Esophagus muscularis mucosa (tissue), 4 donors: ENCODE measurements at regions of chr10 and their contacts with region 1.

Region 1: GRCh38 chr10:131981429-131982184 is at the start of gene BNIP3:
- DNase-seq: peak; percentile 96
- H3K4me3 ChIP-seq: peak within 1 kb of the TSS; percentile 81 to 99 (median 90)
- H3K27ac ChIP-seq: peak within 1 kb of the TSS; percentile 83 to 87 (median 86)
- H3K4me1 ChIP-seq: peaks cover 35 to 46% (median 40%) of the 10 kb centered on the region in 4 donors
- H3K27me3 ChIP-seq: no peaks in the 10 kb centered on the region
- CTCF ChIP-seq: peak in 1 of 3 experiments; percentile 26
- EP300 ChIP-seq: no peak
- POLR2A ChIP-seq: peak; percentile 90
- total RNA-seq, gene BNIP3: 51.4 to 68.9 (median 62.6) TPM

Region 2: DNA sequence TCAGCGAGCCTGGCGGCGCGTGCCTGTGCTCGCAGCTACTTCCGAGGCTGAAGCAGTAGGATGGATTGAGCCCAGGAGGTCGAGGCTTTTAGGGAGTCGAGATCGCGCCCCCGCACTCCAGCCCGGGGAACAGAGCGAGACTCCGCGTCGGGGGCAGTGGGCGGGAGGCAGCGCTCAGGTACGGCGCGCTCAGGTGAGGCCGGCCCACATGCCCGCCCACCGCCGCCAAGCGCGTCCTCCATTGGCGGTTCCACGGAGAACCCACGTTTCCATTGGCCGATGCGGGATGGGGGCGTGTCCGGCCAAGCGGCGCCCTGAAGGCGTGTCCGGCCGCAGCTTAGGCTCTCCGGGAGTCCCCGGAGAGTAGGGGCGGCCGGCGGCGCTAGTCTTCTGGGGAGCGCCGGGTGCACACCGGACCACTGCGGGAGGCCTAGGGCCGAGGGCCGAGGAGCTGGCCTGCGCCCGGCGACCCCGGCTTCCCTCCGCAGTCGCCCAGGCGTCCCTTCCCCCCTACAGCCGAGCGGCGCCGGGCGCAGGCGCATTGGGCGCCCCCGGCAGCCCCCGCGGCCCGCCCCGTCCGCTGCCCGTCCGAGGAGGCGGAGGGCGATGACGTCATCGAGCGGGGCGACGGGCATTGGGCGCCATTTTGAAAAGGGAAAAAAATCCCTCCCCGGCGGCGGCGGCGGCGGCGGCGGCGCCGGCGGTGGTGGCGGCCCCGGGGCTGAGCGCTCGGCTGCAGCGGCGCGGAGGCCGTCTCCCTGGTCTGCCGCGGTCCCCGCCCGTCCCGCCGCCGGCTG is 81.1 kb before region 1 on chr10 and contains the start of gene PPP2R2D:
- intact Hi-C with region 1: loop called (anchors 5 kb)
- DNase-seq: peak; percentile 97
- H3K4me3 ChIP-seq: peak within 1 kb of the TSS; percentile 76 to 96 (median 88)
- H3K27ac ChIP-seq: peak within 1 kb of the TSS; percentile 92 to 98 (median 96)
- H3K4me1 ChIP-seq: peaks cover 40 to 49% (median 47%) of the 10 kb centered on the region in 4 donors
- H3K27me3 ChIP-seq: peaks cover 0 to 27% (median 6%) of the 10 kb centered on the region in 4 donors
- CTCF ChIP-seq: no peak
- EP300 ChIP-seq: no peak
- POLR2A ChIP-seq: no peak
- total RNA-seq, gene PPP2R2D: 38.2 to 49.7 (median 41.0) TPM

Region 3: DNA sequence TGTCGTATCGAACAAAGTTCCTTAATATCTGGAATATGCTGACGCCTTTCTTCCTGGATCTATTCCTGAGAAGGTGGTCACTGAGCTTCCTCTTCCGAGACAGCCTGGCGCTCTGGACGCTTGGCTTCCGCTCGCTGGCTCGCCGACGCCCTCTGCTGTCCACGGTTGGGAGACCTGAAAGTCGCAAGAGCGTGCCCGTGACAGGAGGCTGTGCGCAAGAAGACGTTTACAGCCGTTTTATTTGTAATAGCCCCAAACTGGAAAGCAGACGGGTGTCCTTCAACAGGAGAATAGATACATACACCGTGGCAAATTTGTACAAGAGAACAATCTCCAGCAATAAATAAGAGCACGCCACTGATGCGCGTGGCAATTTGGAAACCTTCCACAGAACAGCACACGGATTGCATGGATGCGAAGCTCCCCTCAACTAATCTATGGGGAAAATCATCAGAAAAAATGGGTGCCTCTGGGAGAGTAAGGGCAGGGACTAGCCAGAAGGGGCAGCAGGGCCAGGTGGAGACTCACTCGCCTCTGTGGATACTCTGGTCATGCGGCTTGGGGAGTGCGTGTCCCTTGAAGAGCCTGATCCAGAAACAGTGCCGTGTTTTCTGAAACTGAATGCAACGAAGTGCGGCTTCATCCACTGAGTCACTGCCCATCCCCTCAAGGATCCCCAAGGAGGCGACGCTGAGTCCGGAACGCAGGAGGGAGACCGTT is 41.6 kb after region 1 on chr10:
- intact Hi-C with region 1: loop called (anchors 5 kb)
- DNase-seq: no peak
- H3K4me3 ChIP-seq: peak overlapping the region; percentile 14 to 50 (median 40)
- H3K27ac ChIP-seq: no peak overlapping the region
- H3K4me1 ChIP-seq: peaks cover 6 to 12% (median 10%) of the 10 kb centered on the region in 4 donors
- H3K27me3 ChIP-seq: peaks cover 0 to 56% (median 2%) of the 10 kb centered on the region in 4 donors
- CTCF ChIP-seq: peak; percentile 82 to 93 (median 86)
- EP300 ChIP-seq: no peak
- POLR2A ChIP-seq: no peak

Region 4: GRCh38 chr10:132281915-132282666 is 300.5 kb after region 1 on chr10:
- intact Hi-C with region 1: no loop called
- DNase-seq: no peak
- H3K4me3 ChIP-seq: no peak overlapping the region
- H3K27ac ChIP-seq: no peak overlapping the region
- H3K4me1 ChIP-seq: peaks cover 0 to 9% (median 2%) of the 10 kb centered on the region in 4 donors
- H3K27me3 ChIP-seq: peaks cover 0 to 25% (median 0%) of the 10 kb centered on the region in 4 donors
- CTCF ChIP-seq: no peak
- EP300 ChIP-seq: no peak
- POLR2A ChIP-seq: no peak

Region 5: GRCh38 chr10:132307823-132308587 is 326.4 kb after region 1 on chr10 and contains the start of gene STK32C:
- intact Hi-C with region 1: loop called (anchors 5 kb)
- DNase-seq: peak; percentile 99
- H3K4me3 ChIP-seq: peak within 1 kb of the TSS; percentile 88 to 98 (median 94)
- H3K27ac ChIP-seq: peak within 1 kb of the TSS; percentile 79 to 92 (median 87)
- H3K4me1 ChIP-seq: peaks cover 12 to 27% (median 24%) of the 10 kb centered on the region in 4 donors
- H3K27me3 ChIP-seq: no peaks in the 10 kb centered on the region
- CTCF ChIP-seq: no peak
- EP300 ChIP-seq: no peak
- POLR2A ChIP-seq: no peak
- total RNA-seq, gene STK32C: 4.8 to 10.9 (median 7.8) TPM